Activated naive CD4-positive, alpha-beta T cell treated with anti-CD3 and anti-CD28 coated beads for 36 hours (primary cell): ENCODE measurements at regions of chr10 and their contacts with region 1.

Region 1: DNA sequence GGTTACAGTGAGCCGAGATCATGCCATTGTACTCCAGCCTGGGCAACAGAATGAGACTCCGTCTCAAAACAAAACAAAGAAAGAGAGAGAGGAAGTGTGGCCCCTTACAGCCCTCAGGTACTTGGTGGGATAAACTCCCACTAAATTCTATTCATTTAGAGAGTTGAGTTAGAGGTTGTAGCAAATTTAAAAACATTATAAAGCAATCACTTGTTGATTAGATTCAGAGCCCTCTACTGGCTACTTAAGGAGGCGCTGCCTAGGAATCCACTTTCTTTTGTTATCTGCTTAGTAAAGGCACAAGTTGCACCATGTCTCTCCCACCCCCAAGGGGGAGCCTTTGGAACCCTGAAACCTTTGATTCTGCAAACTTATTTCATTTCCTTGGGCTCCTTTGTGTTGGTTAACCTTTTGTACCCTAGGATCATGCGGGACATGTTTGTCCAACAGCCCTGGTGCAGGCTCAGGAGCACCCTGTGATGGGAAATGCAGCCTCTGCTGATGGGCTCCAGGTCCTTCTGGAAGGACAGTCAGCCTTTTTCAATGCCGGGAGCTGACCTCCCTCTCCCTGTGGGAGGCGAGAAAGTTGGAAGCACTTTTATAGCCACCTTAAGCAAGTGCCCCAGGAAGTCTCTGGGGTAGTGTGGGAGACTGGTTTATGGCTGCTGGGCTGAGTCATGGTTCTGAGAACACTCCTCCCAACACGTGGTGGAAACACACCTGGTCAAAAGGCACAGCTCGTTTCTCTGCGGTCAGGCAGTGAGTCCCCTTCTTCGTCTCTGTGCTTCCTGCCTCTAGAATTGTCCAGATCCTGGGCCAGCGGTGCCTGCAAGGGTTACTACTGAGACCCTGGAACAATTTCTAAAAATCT is 2.3 kb downstream of the HKDC1 start:
- DNase-seq: peak; percentile 93
- H3K4me3 Mint-ChIP-seq: peak overlapping the region; percentile 60
- H3K27ac Mint-ChIP-seq: peak overlapping the region; percentile 85
- H3K4me1 Mint-ChIP-seq: peaks cover 23% of the 10 kb centered on the region
- H3K27me3 Mint-ChIP-seq: no peaks in the 10 kb centered on the region

Region 2: DNA sequence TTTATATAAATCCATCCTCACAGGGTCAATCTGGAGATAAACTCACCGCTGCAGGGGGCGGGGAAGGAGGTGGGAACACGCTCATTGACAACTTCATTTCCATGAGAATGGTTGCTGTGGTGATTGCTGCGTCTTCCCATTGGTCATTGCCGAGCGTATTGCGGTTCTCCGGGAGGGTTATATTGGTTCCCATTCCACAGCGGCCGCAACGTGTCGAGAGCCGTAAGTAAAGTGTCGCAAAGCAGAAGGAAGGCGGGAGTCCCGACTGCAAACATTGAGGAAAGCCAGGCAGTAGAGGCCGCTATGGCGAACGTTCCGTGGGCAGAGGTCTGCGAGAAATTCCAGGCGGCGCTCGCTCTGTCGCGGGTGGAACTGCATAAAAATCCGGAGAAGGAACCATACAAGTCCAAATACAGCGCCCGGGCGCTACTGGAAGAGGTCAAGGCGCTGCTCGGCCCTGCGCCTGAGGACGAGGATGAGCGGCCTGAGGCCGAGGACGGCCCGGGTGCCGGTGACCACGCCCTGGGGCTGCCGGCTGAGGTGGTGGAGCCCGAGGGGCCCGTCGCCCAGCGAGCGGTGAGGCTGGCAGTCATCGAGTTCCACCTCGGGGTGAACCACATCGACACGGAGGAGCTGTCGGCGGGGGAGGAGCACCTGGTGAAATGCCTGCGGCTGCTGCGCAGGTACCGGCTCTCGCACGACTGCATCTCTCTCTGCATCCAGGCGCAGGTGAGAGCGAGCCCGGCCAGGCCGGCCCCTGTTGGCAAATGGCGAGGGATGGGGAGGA is 233.7 kb before region 1 on chr10 and contains the start of gene KIFBP:
- CTCF ChIA-PET with region 1: no interaction called
- intact Hi-C with region 1: loop called (anchors 1 kb)
- DNase-seq: peak; percentile 94
- H3K4me3 Mint-ChIP-seq: peak within 1 kb of the TSS; percentile 98
- H3K27ac Mint-ChIP-seq: peak within 1 kb of the TSS; percentile 92
- H3K4me1 Mint-ChIP-seq: peaks cover 44% of the 10 kb centered on the region
- H3K27me3 Mint-ChIP-seq: no peaks in the 10 kb centered on the region
- total RNA-seq, gene KIFBP: 10.1 to 10.6 TPM

Region 3: GRCh38 chr10:68997211-68997610 is 225.2 kb before region 1 on chr10:
- CTCF ChIA-PET with region 1: no interaction called
- intact Hi-C with region 1: loop called (anchors 2 kb)
- DNase-seq: no peak
- H3K4me3 Mint-ChIP-seq: no peak overlapping the region
- H3K27ac Mint-ChIP-seq: peak overlapping the region; percentile 90
- H3K4me1 Mint-ChIP-seq: peaks cover 47% of the 10 kb centered on the region
- H3K27me3 Mint-ChIP-seq: no peaks in the 10 kb centered on the region

Region 4: DNA sequence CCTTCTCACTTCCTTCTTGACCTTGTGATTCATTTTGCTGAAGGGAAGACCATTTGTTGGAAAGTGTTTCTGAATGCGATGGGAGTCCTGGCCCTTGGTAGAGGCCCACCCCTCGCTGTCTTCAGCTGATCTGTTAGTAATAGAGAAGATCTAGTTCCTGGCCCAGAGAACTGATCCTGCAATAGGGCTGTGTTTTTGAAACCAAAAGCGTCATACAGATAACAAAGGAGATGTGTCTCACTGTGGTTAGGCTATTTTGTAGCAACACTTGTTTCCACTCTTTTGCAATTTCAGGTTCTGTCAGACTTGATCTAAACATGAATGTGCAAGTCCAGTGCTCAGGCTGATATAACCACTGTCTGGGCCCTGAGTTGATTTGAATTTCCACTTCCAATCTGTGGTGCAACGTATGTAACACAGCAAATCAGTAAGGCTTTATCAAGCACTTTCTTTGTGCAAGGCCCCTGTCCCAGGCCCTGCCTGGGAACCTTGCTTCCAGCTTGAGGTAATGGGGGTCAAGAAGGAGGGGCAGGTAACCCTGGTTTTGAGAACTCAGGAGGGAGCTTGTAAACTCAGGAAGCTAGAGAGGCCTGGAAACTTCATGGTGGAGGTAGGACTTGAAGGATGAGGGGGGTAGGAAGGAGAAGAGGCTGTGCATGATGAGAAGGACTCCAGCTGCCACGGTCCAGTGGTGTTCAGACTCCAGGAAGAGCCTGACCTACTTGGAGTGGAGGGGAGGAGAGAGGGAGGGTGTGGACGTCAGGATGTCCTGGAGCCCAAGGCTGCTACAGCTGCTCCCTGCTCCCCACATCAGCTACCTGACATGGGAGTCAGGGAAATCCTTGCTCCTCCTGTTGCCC is 176.7 kb before region 1 on chr10:
- CTCF ChIA-PET with region 1: no interaction called
- intact Hi-C with region 1: loop called (anchors 5 kb)
- DNase-seq: peak; percentile 60
- H3K4me3 Mint-ChIP-seq: no peak overlapping the region
- H3K27ac Mint-ChIP-seq: peak overlapping the region; percentile 87
- H3K4me1 Mint-ChIP-seq: peaks cover 29% of the 10 kb centered on the region
- H3K27me3 Mint-ChIP-seq: no peaks in the 10 kb centered on the region

Region 5: GRCh38 chr10:69179743-69180524 is 42.5 kb before region 1 on chr10 and contains the start of gene SUPV3L1:
- CTCF ChIA-PET with region 1: no interaction called
- intact Hi-C with region 1: loop called (anchors 1 kb)
- DNase-seq: peak; percentile 92
- H3K4me3 Mint-ChIP-seq: peak within 1 kb of the TSS; percentile 92
- H3K27ac Mint-ChIP-seq: peak within 1 kb of the TSS; percentile 98
- H3K4me1 Mint-ChIP-seq: peaks cover 32% of the 10 kb centered on the region
- H3K27me3 Mint-ChIP-seq: no peaks in the 10 kb centered on the region
- total RNA-seq, gene SUPV3L1: 38.4 to 41.1 TPM

Region 6: GRCh38 chr10:69262292-69262751 is 39.9 kb after region 1 on chr10:
- CTCF ChIA-PET with region 1: no interaction called
- intact Hi-C with region 1: loop called (anchors 1 kb)
- DNase-seq: no peak
- H3K4me3 Mint-ChIP-seq: no peak overlapping the region
- H3K27ac Mint-ChIP-seq: peak overlapping the region; percentile 62
- H3K4me1 Mint-ChIP-seq: peaks cover 17% of the 10 kb centered on the region
- H3K27me3 Mint-ChIP-seq: no peaks in the 10 kb centered on the region